H1 (cell line): ENCODE measurements at regions of chr4 and their contacts with region 1.

Region 1: DNA sequence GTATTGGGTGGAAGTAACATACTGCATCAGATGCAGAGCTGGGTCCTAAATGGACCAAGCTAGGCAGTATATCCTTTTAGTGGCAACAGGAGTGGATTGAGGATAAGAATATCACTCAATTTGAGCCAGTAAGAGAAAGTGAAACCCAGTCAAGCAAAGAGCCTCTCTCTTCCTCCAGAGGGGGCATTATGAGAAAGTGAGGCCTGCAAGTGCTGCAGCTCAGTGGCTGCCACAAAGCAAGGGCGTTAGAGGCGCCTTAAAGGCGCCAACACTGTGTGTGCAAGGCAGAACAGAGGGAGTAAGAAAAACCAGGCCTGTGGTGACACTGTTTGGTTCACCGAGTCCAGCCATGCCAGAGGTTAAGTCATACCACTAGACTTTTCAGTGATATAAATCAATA is 17.5 kb downstream of the STX18 start:
- DNase-seq: no peak
- H3K4me3 ChIP-seq: no peak overlapping the region
- H3K27ac ChIP-seq: no peak overlapping the region
- H3K4me1 ChIP-seq: peaks cover 0 to 4% (median 2%) of the 10 kb centered on the region in 4 experiments; a peak in 1 of 7 replicates
- H3K27me3 ChIP-seq: no peaks in the 10 kb centered on the region
- CTCF ChIP-seq: peak; percentile 24 to 40 (median 37)
- EP300 ChIP-seq: no peak
- POLR2A ChIP-seq: no peak
- RAD21 ChIP-seq: peak; percentile 12 to 37; a peak in 2 of 4 replicates

Region 2: DNA sequence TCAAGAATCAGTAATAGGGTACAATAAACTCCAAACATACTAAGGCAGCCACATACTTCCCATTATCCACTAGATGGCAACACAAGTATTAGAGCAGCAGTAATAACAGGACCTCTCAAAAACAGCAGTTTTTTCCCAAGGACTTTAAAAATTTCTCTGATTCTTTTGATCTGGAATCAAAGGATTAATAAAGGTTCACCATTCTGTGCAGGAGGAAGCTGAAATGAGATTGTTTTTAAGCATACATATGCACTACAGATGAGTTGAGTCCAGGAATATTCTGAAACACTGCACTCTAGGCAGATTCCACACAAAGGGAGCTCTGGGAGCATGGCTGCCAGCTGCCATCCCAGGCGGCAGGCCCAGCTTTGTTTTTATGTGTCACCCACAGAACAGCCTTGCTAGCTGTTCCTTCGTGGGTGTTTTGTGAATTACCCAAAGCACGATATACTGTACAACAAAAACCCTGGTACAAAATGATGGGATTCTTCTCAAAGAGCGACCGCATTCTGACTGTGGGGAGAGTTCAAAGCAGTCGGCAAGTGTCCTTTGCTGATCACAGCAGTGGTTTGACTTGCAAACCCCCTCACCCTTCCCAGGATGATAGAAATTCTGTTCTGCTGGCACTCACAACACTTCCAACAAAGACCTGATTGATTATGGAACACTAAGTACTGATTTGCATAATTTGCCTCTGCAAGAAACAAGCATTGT is 43.5 kb before region 1 on chr4:
- CTCF ChIA-PET with region 1: interaction called, 14 read pairs
- POLR2A ChIA-PET with region 1: interaction called, 3 read pairs
- DNase-seq: no peak
- H3K4me3 ChIP-seq: no peak overlapping the region; a peak in 1 of 8 replicates
- H3K27ac ChIP-seq: no peak overlapping the region
- H3K4me1 ChIP-seq: peaks cover 2 to 23% (median 10%) of the 10 kb centered on the region in 4 experiments
- H3K27me3 ChIP-seq: no peaks in the 10 kb centered on the region
- CTCF ChIP-seq: peak in 1 of 3 experiments; percentile 8; a peak in 2 of 4 replicates
- EP300 ChIP-seq: no peak
- POLR2A ChIP-seq: no peak
- RAD21 ChIP-seq: peak in 1 of 2 experiments; percentile 18; a peak in 2 of 4 replicates

Region 3: GRCh38 chr4:4488405-4489404 is 35.7 kb before region 1 on chr4:
- CTCF ChIA-PET with region 1: interaction called, 13 read pairs
- POLR2A ChIA-PET with region 1: interaction called, 3 read pairs
- DNase-seq: peak; percentile 15 to 74
- H3K4me3 ChIP-seq: no peak overlapping the region
- H3K27ac ChIP-seq: no peak overlapping the region
- H3K4me1 ChIP-seq: peaks cover 0 to 4% (median 2%) of the 10 kb centered on the region in 4 experiments; a peak in 4 of 7 replicates
- H3K27me3 ChIP-seq: peaks cover 0 to 1% (median 0%) of the 10 kb centered on the region in 4 experiments; a peak in 1 of 7 replicates
- CTCF ChIP-seq: peak; percentile 53 to 94 (median 74)
- EP300 ChIP-seq: no peak
- POLR2A ChIP-seq: no peak
- RAD21 ChIP-seq: peak; percentile 87 to 88

Region 4: DNA sequence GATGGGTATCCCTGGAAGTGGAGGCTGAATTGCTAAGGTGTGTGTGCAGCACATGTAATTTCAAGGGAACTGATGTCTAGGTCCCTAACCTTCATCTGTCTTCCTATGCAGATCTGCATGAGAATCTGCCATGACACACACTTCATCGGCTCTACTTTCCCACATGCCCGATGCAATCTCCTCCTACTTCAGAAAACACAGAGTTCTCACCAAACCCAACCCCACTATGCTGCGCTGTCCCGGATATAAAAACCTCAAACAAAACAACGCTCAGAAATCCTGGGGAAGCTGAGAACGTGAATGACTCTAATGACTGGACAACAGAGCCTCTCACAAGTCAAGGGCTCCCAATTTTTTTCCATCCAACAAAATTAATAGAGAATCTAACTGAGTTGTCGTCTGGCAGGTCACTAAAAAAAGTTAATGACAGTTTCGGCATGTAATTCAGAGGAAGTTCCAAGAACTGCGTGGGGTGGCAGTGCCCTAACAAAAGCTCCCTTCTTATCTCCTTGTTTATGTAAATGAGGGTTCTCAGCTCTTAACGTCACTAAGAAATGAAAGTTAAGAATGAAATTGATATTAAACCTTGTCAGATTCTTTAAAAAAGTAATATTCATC is 21.6 kb before region 1 on chr4:
- CTCF ChIA-PET with region 1: interaction called, 86 read pairs
- POLR2A ChIA-PET with region 1: no interaction called
- DNase-seq: no peak
- H3K4me3 ChIP-seq: no peak overlapping the region
- H3K27ac ChIP-seq: no peak overlapping the region
- H3K4me1 ChIP-seq: peaks cover 0 to 5% (median 2%) of the 10 kb centered on the region in 4 experiments; a peak in 1 of 7 replicates
- H3K27me3 ChIP-seq: peaks cover 0 to 3% (median 0%) of the 10 kb centered on the region in 4 experiments; a peak in 1 of 7 replicates
- CTCF ChIP-seq: no peak
- EP300 ChIP-seq: no peak
- POLR2A ChIP-seq: no peak
- RAD21 ChIP-seq: no peak

Region 5: GRCh38 chr4:4507923-4508322 is 16.4 kb before region 1 on chr4:
- CTCF ChIA-PET with region 1: interaction called, 86 read pairs
- POLR2A ChIA-PET with region 1: no interaction called
- DNase-seq: no peak
- H3K4me3 ChIP-seq: no peak overlapping the region
- H3K27ac ChIP-seq: no peak overlapping the region
- H3K4me1 ChIP-seq: no peaks in the 10 kb centered on the region
- H3K27me3 ChIP-seq: no peaks in the 10 kb centered on the region
- CTCF ChIP-seq: peak; percentile 22 to 60 (median 34)
- EP300 ChIP-seq: no peak
- POLR2A ChIP-seq: no peak
- RAD21 ChIP-seq: peak; percentile 32 to 37

Region 6: GRCh38 chr4:4541661-4542570 is 17.6 kb after region 1 on chr4 and contains the start of gene STX18:
- CTCF ChIA-PET with region 1: interaction called, 12 read pairs
- POLR2A ChIA-PET with region 1: interaction called, 17 read pairs
- DNase-seq: peak; percentile 44 to 99
- H3K4me3 ChIP-seq: peak within 1 kb of the TSS; percentile 88 to 95 (median 90)
- H3K27ac ChIP-seq: peak within 1 kb of the TSS; percentile 86
- H3K4me1 ChIP-seq: 0 out of 7 replicates have a peak, but pooled peaks cover 0 to 3% (median 0%) of the 10 kb centered on the region in 4 experiments
- H3K27me3 ChIP-seq: no peaks in the 10 kb centered on the region
- CTCF ChIP-seq: peak in 1 of 3 experiments; percentile 5; a peak in 1 of 4 replicates
- EP300 ChIP-seq: peak; percentile 59 to 88
- POLR2A ChIP-seq: peak in 1 of 2 experiments; percentile 86; a peak in 2 of 3 replicates
- RAD21 ChIP-seq: peak; percentile 18 to 41; a peak in 3 of 4 replicates
- total RNA-seq, gene STX18: 18.3 and 20.0 TPM in 2 replicates